Mucosa of descending colon (tissue), 3 donors: ENCODE measurements at regions of chr18 and their contacts with region 1.

Region 1: GRCh38 chr18:46641917-46642316 is 15.1 kb downstream of the LOXHD1 start:
- DNase-seq: no peak
- ATAC-seq: no peak
- H3K4me3 ChIP-seq: no peak overlapping the region
- H3K4me1 ChIP-seq: no peaks in the 10 kb centered on the region
- CTCF ChIP-seq: no peak

Region 2: DNA sequence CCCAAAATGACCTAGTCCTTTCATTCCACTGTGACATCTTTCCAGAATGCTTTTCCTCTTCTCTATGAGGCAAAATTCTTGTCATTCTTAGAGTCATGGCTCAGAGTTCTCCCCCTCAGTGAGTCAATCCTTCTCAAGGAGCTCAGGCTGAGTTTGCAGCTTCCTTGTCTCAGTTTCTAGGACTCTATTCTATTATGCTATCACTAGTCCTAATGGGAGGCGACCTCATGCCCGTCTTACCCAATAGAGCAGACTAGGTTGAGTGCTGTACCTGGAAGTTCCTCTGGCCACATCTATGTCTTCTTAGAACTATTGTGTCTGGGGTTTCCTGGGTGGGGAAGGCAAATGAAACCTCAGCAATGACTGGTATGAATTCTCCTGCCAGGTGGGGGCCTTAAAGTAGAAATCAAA is 486.3 kb before region 1 on chr18:
- intact Hi-C with region 1: loop called in 1 of 2 experiments (anchors 10 kb)
- DNase-seq: no peak
- ATAC-seq: peak; percentile 57
- H3K4me3 ChIP-seq: no peak overlapping the region
- H3K4me1 ChIP-seq: no peaks in the 10 kb centered on the region
- CTCF ChIP-seq: no peak